GM10248 (cell line): ENCODE measurements at regions of chr14 and their contacts with region 1.

Region 1: DNA sequence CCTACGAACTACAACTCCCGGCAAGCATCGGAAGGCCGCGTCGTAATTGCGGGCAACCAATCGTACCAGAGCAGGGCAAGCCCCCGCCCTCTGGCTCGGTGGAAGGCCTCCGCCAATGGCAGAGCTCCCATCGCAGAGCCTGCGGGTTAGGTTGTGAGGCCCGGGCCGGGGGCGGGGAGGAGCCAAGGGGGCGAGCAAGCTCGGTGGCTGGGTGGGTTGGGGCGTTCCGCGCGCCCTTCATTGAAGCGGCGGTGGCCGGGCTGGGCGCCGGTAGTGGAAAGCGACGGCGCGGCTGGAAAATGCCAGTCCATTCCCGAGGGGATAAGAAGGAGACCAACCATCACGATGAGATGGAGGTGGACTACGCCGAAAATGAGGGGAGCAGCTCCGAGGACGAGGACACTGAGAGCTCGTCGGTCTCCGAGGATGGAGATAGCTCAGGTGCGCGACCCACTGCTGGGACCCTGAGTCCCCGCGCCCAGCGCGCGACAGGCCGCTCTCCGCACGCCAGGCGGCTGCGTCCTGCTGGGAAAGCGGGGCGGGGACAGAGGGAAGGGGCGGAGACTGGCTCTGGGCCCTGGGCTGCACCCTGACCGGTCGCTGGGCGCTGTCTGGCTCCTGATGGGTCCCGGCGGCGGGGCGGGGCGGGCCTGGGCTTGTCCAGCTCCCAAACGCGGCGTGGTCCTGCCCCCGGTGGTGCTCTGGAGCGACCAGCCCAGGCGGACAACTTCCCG is at the start of gene BRMS1L:
- DNase-seq: peak; percentile 98
- CTCF ChIP-seq: no peak

Region 2: DNA sequence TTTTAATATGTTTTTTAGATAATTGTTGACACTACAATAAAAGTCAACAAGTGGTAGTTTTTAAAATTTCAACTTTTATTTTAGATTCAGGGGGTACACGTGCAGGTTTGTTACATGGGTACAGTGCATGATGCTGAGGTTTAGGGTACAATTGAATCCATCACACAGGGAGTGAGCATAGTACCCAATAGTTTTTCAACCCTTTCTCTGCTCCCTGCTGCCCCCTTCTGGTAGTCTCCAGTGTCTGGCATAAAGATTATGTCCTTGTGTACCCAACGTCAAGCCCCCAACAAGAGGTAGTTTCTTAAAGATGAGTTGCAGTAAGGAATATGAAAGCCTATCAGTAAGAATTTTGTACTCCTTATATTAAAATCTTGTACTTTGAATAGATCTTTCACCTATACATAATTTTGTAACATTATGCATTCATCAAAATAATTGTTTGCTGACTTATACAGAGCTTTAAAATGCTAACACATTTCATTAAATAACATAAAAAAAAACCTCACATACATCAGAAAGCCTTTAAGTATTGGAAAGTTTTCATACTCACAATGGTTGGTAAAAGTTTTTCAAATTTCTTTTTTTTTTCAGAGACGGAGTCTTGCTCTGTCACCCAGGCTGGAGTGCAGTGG is 11.9 kb before region 1 on chr14:
- CTCF ChIA-PET with region 1: interaction called, 13 read pairs
- POLR2A ChIA-PET with region 1: interaction called, 3 read pairs
- DNase-seq: peak; percentile 50
- CTCF ChIP-seq: peak; percentile 81